Dendritic cell treated with granulocyte-macrophage colony-stimulating factor and Interleukin-4, amounts not matched to agents 40 ng/mL and 50 ng/mL, for 4 days (primary cell): ENCODE measurements at regions of chr17 and their contacts with region 1.

Region 1: DNA sequence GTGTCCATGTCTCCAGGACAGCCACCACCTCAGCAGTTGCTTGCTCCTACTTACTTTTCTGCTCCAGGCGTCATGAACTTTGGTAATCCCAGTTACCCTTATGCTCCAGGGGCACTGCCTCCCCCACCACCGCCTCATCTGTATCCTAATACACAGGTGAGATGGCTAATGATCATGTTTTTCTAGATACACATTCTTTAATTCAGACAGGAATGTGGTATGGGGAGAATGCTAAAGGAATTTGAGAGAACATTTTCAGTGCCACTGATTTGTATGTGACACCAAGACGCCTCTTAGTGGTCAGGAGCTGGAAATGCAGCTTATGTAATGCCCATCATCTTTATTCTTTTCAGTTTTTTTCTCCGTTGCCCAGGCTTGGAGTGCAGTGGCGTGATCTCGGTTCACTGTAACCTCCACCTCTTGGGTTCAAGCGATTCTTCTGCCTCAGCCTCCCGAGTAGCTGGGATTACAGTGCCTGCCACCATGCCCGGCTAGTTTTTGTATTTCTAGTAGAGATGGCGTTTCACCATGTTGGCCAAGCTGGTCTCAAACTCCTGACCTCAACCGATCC is 8.9 kb upstream of the RAPGEFL1 start:
- H3K4me3 Mint-ChIP-seq: no peak overlapping the region
- H3K27ac Mint-ChIP-seq: peak overlapping the region; percentile 5
- H3K4me1 Mint-ChIP-seq: peaks cover 9% of the 10 kb centered on the region
- H3K27me3 Mint-ChIP-seq: no peaks in the 10 kb centered on the region

Region 2: DNA sequence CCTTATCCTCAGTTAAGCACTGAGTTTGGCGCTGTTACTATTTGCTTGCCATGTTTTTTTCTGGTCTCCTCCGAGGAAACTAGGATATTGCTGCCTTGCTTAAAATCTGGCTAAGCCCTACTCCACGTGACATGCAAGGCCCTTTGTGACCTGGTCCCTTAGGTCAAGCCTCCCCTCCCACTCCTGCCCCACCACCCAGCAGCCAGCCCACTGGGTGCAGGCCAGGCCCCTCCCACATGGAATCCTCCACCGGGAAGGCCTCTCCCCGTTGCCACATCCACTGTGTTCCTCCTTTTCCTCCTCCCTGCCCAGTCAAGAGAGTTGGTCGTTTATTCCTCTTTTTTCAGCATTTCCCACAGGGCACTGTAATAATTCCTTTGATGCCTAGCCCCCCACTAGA is 171.5 kb before region 1 on chr17:
- intact Hi-C with region 1: no loop called
- H3K4me3 Mint-ChIP-seq: no peak overlapping the region
- H3K27ac Mint-ChIP-seq: peak overlapping the region; percentile 23
- H3K4me1 Mint-ChIP-seq: peaks cover 15% of the 10 kb centered on the region
- H3K27me3 Mint-ChIP-seq: no peaks in the 10 kb centered on the region

Region 3: DNA sequence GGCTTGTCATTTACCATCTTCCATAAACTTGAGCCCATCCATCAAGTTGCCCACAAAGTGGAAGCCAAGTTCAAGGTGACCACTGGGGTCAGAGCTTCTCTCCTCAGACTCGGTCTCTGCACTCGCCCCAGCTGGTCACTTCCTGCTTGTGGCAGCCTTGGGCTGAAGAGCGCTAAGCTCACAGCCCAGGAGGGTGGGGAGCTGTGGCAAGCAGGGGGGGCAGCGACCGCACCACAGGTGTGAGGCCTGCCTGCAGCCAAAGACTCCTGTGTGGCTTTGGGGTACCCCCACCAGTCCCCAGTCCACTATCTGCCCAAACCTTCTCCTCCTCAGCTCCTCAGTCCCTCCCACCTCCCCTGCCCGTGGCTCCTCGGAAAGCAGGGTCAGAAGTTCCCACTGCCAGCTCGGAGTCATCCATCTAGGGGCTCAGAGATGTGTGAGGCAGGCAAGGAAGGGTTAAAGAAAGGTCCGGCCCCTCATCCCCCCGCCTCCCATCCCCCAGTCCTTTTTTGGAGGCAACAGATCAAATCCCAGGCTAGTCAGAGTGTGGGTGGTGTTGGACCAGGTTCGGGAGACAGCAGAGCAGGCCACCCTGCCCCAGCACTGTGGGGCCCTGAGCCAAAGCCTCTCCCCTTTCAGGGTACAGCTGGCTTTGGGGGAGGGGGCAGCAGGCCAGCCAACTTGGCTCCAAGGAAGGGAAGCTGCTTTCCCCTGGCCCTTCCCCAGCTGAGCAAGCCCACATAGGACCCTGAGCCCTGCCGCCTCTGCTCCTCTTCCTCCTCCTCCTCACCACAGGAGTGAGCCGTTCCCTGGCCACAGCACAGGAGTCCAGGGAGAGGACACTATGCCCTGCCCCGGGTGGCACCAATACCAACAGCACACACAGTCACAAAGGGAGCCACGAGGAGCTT is 149.9 kb before region 1 on chr17:
- intact Hi-C with region 1: loop called (anchors 5 kb)
- H3K4me3 Mint-ChIP-seq: no peak overlapping the region
- H3K27ac Mint-ChIP-seq: no peak overlapping the region
- H3K4me1 Mint-ChIP-seq: peaks cover 21% of the 10 kb centered on the region
- H3K27me3 Mint-ChIP-seq: peaks cover 21% of the 10 kb centered on the region